ENCODE measurements at regions of chr17 and their contacts with region 1.

Region 1: DNA sequence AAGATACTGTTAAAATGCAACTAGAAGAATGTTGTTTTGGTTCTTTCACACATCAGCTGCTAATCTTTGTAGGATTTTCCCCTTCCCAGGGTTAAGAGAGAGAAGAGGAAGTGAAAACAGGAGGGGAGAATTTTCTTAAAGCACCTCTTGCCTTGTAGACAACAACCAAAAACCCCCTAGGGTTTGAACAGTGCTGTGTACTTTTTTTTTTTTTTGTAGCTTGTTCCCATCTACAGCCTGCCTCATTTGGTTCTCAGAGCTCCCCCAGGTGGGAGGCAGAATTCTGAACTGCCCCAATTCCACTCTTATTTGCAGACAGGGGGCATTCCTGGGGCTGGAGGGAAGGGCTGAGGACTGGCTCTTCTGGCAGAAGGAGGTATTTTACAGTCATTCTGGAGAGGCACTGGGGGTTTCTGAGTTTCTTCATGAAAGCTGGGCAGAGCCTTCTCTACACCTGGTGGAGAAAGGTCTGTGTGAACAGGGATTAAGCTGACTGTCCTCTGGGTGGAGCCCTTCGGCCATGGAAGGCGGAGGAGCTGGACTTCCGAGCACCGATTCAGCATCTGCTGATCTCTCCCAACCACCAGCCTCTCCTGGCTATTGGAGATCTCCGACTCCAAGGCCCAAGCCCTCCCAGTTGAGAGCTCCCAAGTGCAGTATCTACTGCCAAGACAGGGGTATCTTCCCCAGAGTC is 32.2 kb downstream of the SMARCE1 start:
- DNase-seq: peak; percentile 47
- ATAC-seq: peak; percentile 73
- H3K4me3 ChIP-seq: no peak overlapping the region
- H3K27ac ChIP-seq: no peak overlapping the region
- H3K4me1 ChIP-seq: no peaks in the 10 kb centered on the region
- H3K27me3 ChIP-seq: peaks cover 66% of the 10 kb centered on the region
- CTCF ChIP-seq: peak; percentile 51
- POLR2A ChIP-seq: no peak
- RAD21 ChIP-seq: peak; percentile 58

Region 2: DNA sequence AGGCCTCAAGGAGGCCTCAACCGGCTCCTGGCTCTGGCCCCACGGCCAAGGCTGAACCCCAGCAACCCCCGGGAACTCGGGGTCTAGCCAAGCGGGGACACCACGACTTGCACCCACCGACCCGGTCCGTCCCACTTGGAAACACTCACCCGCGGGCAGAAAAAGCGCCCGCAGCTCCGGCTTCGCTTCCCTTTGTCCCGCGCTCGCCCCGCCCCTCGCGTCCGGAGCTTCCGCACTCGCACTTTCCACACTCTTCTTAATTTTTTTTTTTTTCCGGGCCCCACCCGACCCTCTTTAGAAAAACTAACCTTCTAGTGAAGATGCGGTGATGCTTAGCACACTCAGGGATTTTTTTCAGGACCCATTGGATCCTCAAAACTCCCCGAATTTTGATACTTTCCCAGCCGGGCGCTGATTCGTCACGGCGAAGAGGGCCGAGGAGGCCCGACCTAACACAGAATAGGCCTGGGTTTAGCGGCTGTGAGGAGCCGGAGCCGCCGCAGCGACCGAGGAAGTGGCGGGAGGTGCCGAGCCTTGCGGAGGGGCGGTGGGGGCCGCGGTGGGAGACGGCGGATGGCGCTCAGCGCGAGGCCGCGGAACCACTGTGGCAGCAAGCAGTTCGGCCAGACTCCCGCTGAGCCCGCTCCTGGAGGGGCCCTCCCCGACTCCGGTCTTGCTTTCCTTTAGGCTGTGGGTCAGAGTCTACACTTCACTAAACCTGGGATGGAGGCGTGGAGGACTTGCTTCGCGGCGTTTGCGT is 32.4 kb after region 1 on chr17 and contains the start of gene SMARCE1:
- CTCF ChIA-PET with region 1: interaction called, 10 read pairs
- POLR2A ChIA-PET with region 1: interaction called, 3 read pairs
- dilution Hi-C with region 1: no loop called
- in situ Hi-C with region 1: no loop called
- intact Hi-C with region 1: no loop called
- DNase-seq: peak; percentile 67
- ATAC-seq: peak; percentile 84
- H3K4me3 ChIP-seq: peak within 1 kb of the TSS; percentile 93
- H3K27ac ChIP-seq: peak within 1 kb of the TSS; percentile 94
- H3K4me1 ChIP-seq: peaks cover 5% of the 10 kb centered on the region
- H3K27me3 ChIP-seq: no peaks in the 10 kb centered on the region
- CTCF ChIP-seq: no peak
- POLR2A ChIP-seq: peak; percentile 75
- RAD21 ChIP-seq: no peak
- total RNA-seq, gene SMARCE1: 119 and 169 TPM in 2 replicates

Region 3: GRCh38 chr17:40791787-40792436 is 176.5 kb after region 1 on chr17:
- CTCF ChIA-PET with region 1: interaction called, 6 read pairs
- POLR2A ChIA-PET with region 1: no interaction called
- dilution Hi-C with region 1: no loop called
- in situ Hi-C with region 1: loop called (anchors 5 kb)
- intact Hi-C with region 1: loop called (anchors 1 kb)
- DNase-seq: peak; percentile 55
- ATAC-seq: peak; percentile 72
- H3K4me3 ChIP-seq: no peak overlapping the region
- H3K27ac ChIP-seq: no peak overlapping the region
- H3K4me1 ChIP-seq: no peaks in the 10 kb centered on the region
- H3K27me3 ChIP-seq: peaks cover 44% of the 10 kb centered on the region
- CTCF ChIP-seq: peak; percentile 71
- POLR2A ChIP-seq: no peak
- RAD21 ChIP-seq: peak; percentile 61

Region 4: GRCh38 chr17:40963838-40964237 is 348.4 kb after region 1 on chr17:
- CTCF ChIA-PET with region 1: no interaction called
- POLR2A ChIA-PET with region 1: no interaction called
- dilution Hi-C with region 1: no loop called
- in situ Hi-C with region 1: no loop called
- intact Hi-C with region 1: no loop called
- DNase-seq: no peak
- ATAC-seq: peak; percentile 53; the same call in 1 of the 2 replicates
- H3K4me3 ChIP-seq: no peak overlapping the region
- H3K27ac ChIP-seq: no peak overlapping the region
- H3K4me1 ChIP-seq: peaks cover 3% of the 10 kb centered on the region; the same call in 1 of the 2 replicates
- H3K27me3 ChIP-seq: no peaks in the 10 kb centered on the region
- CTCF ChIP-seq: peak; percentile 48
- POLR2A ChIP-seq: no peak
- RAD21 ChIP-seq: peak; percentile 25; the same call in 1 of the 2 replicates